GM13977 (cell line): ENCODE measurements at regions of chr12 and their contacts with region 1.

Region 1: DNA sequence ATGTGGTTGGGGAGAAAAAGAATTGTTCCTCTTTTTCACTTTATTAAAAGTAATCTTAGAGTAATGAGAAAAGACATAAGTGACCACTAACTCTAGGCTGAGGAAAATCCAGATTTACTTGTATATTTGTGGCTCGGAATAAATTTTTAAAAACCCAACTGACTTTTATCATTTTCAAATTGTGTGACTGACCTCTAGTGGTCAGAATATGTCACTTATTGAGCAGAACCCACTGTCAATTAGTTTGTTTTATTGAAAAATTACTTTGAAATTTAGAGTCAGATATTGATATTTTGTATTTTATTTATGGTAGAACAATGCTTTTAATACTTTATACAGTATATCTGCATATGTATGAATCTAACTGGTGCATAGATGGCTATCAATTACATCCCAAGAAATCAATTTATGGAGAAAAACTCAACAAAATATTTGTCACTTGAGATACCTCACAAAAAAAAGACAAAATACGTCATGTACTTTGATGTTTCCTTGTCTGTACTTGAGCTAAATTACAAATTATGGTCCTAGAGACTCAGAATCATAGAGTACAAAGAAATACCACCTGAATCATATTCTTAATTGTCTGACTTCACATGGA is 229.4 kb downstream of the CNTN1 start:
- DNase-seq: no peak
- CTCF ChIP-seq: peak; percentile 54

Region 2: DNA sequence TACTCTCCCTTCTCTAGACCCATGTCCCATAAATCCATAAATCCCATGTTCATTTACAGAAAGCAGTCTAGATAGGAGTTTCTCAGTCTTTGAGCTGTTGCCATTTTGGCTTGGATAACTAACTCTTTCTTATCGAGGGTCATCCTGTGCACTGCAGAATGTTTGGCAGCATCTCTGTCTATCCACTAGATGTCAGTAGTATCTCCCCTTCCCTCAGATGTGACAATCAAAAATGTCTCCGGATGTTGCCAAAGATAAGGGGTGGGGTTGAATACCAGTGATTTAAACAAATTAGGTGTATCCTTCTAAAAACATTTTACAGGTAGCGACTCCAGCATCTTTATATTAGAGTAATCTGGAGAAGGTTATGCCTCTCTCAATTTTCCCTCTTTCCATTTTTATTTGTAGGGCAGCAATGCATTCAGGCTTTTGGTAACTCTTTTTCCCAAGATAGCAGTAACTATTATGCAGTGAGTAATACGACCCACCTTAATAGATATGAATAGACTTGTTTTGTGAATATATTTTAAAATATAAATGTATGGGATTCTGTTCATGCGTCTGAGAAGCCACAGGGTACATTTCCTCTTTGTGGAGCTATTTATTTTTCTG is 596.2 kb before region 1 on chr12:
- in situ Hi-C with region 1: loop called (anchors 25 kb)
- DNase-seq: peak; percentile 35
- CTCF ChIP-seq: peak; percentile 74

Region 3: DNA sequence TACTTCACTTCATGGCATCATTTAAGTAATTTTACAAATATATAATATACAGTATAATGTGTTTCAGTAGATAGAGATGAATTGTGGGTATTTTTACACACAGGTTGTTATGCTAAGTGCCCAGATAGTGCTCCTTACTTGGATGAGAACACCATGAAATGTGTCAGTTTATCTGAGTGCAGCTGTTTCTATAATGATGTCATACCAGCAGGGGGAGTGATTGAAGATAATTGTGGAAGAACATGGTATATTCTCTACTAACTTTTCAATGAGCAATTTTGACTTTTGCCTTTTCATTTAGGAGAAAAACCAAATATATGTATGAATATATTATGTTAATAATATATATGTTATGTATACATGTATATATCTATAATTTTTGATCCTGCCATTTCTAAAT is 475.3 kb before region 1 on chr12:
- in situ Hi-C with region 1: loop called (anchors 25 kb)
- DNase-seq: peak; percentile 30
- CTCF ChIP-seq: peak; percentile 64

Region 4: GRCh38 chr12:40622246-40622838 is 299.3 kb before region 1 on chr12:
- in situ Hi-C with region 1: loop called (anchors 25 kb)
- DNase-seq: peak; percentile 63
- CTCF ChIP-seq: peak; percentile 74